ENCODE measurements at regions of chr12 and their contacts with region 1.

Region 1: GRCh38 chr12:2890388-2891239 is at the start of gene TULP3:
- DNase-seq: peak; percentile 99
- H3K4me3 ChIP-seq: peak within 1 kb of the TSS; percentile 81
- H3K27ac ChIP-seq: peak within 1 kb of the TSS; percentile 89
- H3K4me1 ChIP-seq: peaks cover 14% of the 10 kb centered on the region
- H3K27me3 ChIP-seq: no peaks in the 10 kb centered on the region
- CTCF ChIP-seq: 0 out of 2 replicates have a peak, but pooled peaks have one; percentile 5
- total RNA-seq, gene TULP3: 48.1 and 55.6 TPM in 2 replicates

Region 2: GRCh38 chr12:2912216-2912575 is 21.6 kb after region 1 on chr12:
- CTCF ChIA-PET with region 1: interaction called, 4 read pairs
- POLR2A ChIA-PET with region 1: no interaction called
- intact Hi-C with region 1: loop called (anchors 2 kb)
- DNase-seq: no peak
- H3K4me3 ChIP-seq: no peak overlapping the region
- H3K27ac ChIP-seq: peak overlapping the region; percentile 79
- H3K4me1 ChIP-seq: peaks cover 14% of the 10 kb centered on the region
- H3K27me3 ChIP-seq: no peaks in the 10 kb centered on the region
- CTCF ChIP-seq: no peak

Region 3: GRCh38 chr12:2959192-2959504 is 68.5 kb after region 1 on chr12 and contains the start of gene TEAD4:
- CTCF ChIA-PET with region 1: no interaction called
- POLR2A ChIA-PET with region 1: no interaction called
- intact Hi-C with region 1: loop called (anchors 1 kb)
- DNase-seq: peak; percentile 87
- H3K4me3 ChIP-seq: peak within 1 kb of the TSS; percentile 71
- H3K27ac ChIP-seq: peak within 1 kb of the TSS; percentile 69
- H3K4me1 ChIP-seq: peaks cover 24% of the 10 kb centered on the region
- H3K27me3 ChIP-seq: no peaks in the 10 kb centered on the region
- CTCF ChIP-seq: no peak
- total RNA-seq, gene TEAD4: 35.0 and 39.8 TPM in 2 replicates

Measured in A673 (cell line).